HepG2 (cell line): ENCODE measurements at regions of chr2 and their contacts with region 1.

Region 1: GRCh38 chr2:63888490-63889402 is 47.0 kb downstream of the UGP2 start:
- DNase-seq: peak; percentile 65
- ATAC-seq: peak; percentile 89
- H3K4me3 ChIP-seq: no peak overlapping the region
- H3K27ac ChIP-seq: no peak overlapping the region
- H3K4me1 ChIP-seq: peaks cover 14% of the 10 kb centered on the region
- H3K27me3 ChIP-seq: no peaks in the 10 kb centered on the region
- CTCF ChIP-seq: peak; percentile 87
- EP300 ChIP-seq: no peak
- POLR2A ChIP-seq: no peak; a peak in 1 of 4 replicates
- RAD21 ChIP-seq: peak; percentile 80

Region 2: DNA sequence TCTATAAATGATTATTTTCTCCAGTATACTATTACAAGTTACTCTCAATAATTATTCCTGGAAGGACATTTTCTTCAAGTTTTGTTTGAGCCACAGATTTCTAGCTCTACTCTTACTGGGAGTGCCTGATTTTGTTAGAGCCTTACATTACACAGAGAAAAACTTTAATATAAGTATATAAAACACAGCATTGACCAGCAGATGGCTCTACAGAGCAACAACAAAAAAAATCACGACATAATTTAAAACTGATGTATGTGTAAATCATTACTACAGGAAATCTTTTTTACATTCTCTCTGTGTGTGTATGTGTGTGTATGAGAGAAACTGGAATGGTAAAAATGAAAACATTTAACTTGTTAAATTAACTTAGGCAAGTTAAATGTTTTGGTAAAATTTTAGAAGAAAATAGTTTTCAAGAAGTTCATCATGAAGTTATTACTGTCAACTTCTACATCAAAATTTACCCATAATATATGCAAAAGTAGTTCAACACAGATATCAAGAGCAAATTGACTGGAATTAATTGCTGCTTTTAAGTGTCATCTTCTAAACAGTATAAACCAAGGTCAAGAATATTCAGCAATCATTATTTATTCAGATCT is 196.6 kb before region 1 on chr2:
- CTCF ChIA-PET with region 1: interaction called, 30 read pairs
- POLR2A ChIA-PET with region 1: no interaction called
- in situ Hi-C with region 1: no loop called
- intact Hi-C with region 1: loop called (anchors 1 kb)
- DNase-seq: peak; percentile 41
- ATAC-seq: peak; percentile 54
- H3K4me3 ChIP-seq: no peak overlapping the region
- H3K27ac ChIP-seq: no peak overlapping the region
- H3K4me1 ChIP-seq: no peaks in the 10 kb centered on the region
- H3K27me3 ChIP-seq: no peaks in the 10 kb centered on the region
- CTCF ChIP-seq: peak; percentile 60
- EP300 ChIP-seq: no peak
- POLR2A ChIP-seq: no peak
- RAD21 ChIP-seq: peak; percentile 54; the same call in 1 of the 2 replicates

Region 3: DNA sequence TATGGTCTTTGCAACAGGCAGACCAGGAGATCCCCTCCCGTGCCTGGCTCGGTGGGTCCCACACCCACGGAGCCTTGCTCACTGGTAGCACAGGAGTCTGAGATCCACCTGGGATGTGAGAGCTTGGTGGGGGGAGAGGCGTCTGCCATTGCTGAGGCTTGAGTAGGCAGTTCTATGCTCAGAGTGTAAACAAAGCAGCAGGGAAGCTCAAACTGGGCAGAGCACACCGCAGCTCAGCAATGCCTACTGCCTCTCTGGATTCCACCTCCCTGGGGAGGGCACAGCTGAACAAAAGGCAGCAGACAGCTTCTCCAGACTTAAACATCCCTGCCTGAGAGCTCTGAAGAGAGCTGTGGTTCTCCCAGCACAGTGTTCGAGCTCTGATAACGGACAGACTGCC is 38.1 kb after region 1 on chr2:
- CTCF ChIA-PET with region 1: no interaction called
- POLR2A ChIA-PET with region 1: no interaction called
- in situ Hi-C with region 1: no loop called
- intact Hi-C with region 1: no loop called
- DNase-seq: no peak
- ATAC-seq: no peak
- H3K4me3 ChIP-seq: no peak overlapping the region
- H3K27ac ChIP-seq: no peak overlapping the region
- H3K4me1 ChIP-seq: no peaks in the 10 kb centered on the region
- H3K27me3 ChIP-seq: no peaks in the 10 kb centered on the region
- CTCF ChIP-seq: no peak
- EP300 ChIP-seq: no peak
- POLR2A ChIP-seq: no peak
- RAD21 ChIP-seq: no peak